ENCODE measurements at regions of chr19 and their contacts with region 1.

Region 1: GRCh38 chr19:19155495-19156219 is 14.4 kb downstream of the MEF2B start:
- DNase-seq: no peak
- ATAC-seq: no peak
- H3K4me3 ChIP-seq: no peak overlapping the region
- H3K4me3 Mint-ChIP-seq: no peak overlapping the region
- H3K27ac ChIP-seq: no peak overlapping the region
- H3K27ac Mint-ChIP-seq: no peak overlapping the region
- H3K4me1 ChIP-seq: no peaks in the 10 kb centered on the region
- H3K4me1 Mint-ChIP-seq: no peaks in the 10 kb centered on the region
- H3K27me3 ChIP-seq: no peaks in the 10 kb centered on the region
- H3K27me3 Mint-ChIP-seq: no peaks in the 10 kb centered on the region
- CTCF ChIP-seq: no peak

Region 2: GRCh38 chr19:19179548-19180441 is 24.1 kb after region 1 on chr19:
- CTCF ChIA-PET with region 1: interaction called, 33 read pairs
- POLR2A ChIA-PET with region 1: no interaction called
- intact Hi-C with region 1: no loop called
- DNase-seq: no peak
- ATAC-seq: no peak
- H3K4me3 ChIP-seq: no peak overlapping the region
- H3K4me3 Mint-ChIP-seq: no peak overlapping the region
- H3K27ac ChIP-seq: no peak overlapping the region
- H3K27ac Mint-ChIP-seq: no peak overlapping the region
- H3K4me1 ChIP-seq: no peaks in the 10 kb centered on the region
- H3K4me1 Mint-ChIP-seq: peaks cover 3% of the 10 kb centered on the region
- H3K27me3 ChIP-seq: no peaks in the 10 kb centered on the region
- H3K27me3 Mint-ChIP-seq: no peaks in the 10 kb centered on the region
- CTCF ChIP-seq: no peak